ENCODE measurements at regions of chr10 and their contacts with region 1.

Region 1: DNA sequence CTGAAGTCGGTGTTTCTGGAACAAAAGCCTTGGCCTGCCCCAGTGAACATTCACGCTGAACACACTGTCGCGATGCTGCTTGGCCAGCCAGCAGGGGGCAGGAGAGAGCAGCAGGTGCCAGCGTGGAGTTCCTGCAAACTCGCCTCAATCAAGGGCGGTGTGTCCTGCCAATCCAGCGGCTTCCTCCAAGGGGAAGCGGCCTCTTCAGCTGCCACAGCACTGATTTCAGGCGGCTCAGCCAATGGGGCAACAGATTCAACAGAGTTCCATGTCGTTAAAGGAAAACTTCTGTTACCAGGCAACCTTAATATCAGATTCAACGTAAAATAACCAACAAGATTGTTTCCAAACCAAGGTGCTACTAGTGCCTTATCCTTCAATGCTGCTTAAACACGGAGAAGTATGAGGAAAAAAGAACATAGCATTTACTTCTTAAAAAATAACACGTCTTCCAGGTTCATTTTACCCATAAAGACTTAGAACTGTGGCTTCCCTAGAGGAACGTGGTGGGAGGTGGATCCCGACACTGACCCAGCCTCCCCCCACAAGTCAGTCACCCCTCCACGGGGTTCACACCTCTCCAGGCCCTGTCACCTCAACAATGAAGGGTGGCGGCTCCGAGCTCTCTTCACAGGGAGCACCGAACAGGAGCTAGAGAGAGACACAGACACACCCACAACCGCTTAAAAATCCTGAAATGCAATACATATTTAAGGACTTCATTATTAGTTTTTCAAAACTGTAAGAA is 178.2 kb downstream of the DIP2C start:
- DNase-seq: peak; percentile 97
- H3K4me3 Mint-ChIP-seq: no peak overlapping the region
- H3K27ac Mint-ChIP-seq: no peak overlapping the region
- H3K4me1 Mint-ChIP-seq: peaks cover 31% of the 10 kb centered on the region
- H3K27me3 Mint-ChIP-seq: no peaks in the 10 kb centered on the region
- CTCF ChIP-seq: peak; percentile 90

Region 2: GRCh38 chr10:615583-616152 is 104.4 kb after region 1 on chr10:
- CTCF ChIA-PET with region 1: no interaction called
- intact Hi-C with region 1: loop called (anchors 10 kb)
- DNase-seq: no peak
- H3K4me3 Mint-ChIP-seq: no peak overlapping the region
- H3K27ac Mint-ChIP-seq: no peak overlapping the region
- H3K4me1 Mint-ChIP-seq: peaks cover 23% of the 10 kb centered on the region
- H3K27me3 Mint-ChIP-seq: no peaks in the 10 kb centered on the region
- CTCF ChIP-seq: no peak

Region 3: DNA sequence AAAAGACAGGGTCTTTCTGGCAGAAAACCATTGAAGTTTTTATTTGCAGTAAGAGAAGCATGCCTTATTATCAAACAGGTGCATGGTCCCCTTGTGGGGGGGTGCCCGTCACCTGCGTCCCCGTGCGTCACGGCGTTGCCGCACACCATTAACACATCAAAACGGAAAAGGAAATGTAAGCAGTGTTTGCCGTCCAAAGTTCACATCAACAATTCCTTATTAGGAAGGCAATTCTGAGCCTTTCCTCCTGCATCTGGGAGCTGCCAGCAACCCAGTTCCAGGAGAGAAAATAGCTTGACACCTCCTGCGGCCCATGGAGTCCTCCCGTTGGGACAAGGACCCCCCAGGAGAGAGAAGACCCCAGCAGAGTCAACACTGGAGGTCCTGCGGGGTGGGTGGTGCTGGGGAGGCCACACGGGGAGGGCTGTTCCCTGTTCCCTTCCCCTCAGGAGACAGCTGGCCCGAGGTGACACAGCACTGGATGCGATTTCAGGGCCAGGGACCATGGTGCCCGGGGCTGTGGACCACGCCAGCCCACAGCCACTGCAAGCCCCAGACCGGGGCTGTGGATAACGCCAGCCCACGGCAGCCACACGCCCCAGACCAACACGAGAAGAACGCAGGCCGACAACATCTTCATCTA is 138.6 kb after region 1 on chr10:
- CTCF ChIA-PET with region 1: no interaction called
- intact Hi-C with region 1: loop called (anchors 2 kb)
- DNase-seq: peak; percentile 83
- H3K4me3 Mint-ChIP-seq: peak overlapping the region; percentile 94
- H3K27ac Mint-ChIP-seq: no peak overlapping the region
- H3K4me1 Mint-ChIP-seq: peaks cover 10% of the 10 kb centered on the region
- H3K27me3 Mint-ChIP-seq: no peaks in the 10 kb centered on the region
- CTCF ChIP-seq: no peak

Region 4: GRCh38 chr10:689433-690371 is 178.4 kb after region 1 on chr10 and contains the start of gene DIP2C:
- CTCF ChIA-PET with region 1: no interaction called
- intact Hi-C with region 1: loop called (anchors 1 kb)
- DNase-seq: peak; percentile 77
- H3K4me3 Mint-ChIP-seq: peak within 1 kb of the TSS; percentile 78
- H3K27ac Mint-ChIP-seq: peak within 1 kb of the TSS; percentile 81
- H3K4me1 Mint-ChIP-seq: peaks cover 22% of the 10 kb centered on the region
- H3K27me3 Mint-ChIP-seq: no peaks in the 10 kb centered on the region
- CTCF ChIP-seq: no peak
- total RNA-seq, gene DIP2C: 11.0 and 13.2 TPM in 2 replicates

Region 5: GRCh38 chr10:784403-785088 is 273.3 kb after region 1 on chr10:
- CTCF ChIA-PET with region 1: interaction called, 6 read pairs
- intact Hi-C with region 1: loop called (anchors 5 kb)
- DNase-seq: peak; percentile 63
- H3K4me3 Mint-ChIP-seq: peak overlapping the region; percentile 60
- H3K27ac Mint-ChIP-seq: peak overlapping the region; percentile 47
- H3K4me1 Mint-ChIP-seq: no peaks in the 10 kb centered on the region
- H3K27me3 Mint-ChIP-seq: no peaks in the 10 kb centered on the region
- CTCF ChIP-seq: no peak